ENCODE measurements at regions of chr1 and their contacts with region 1.

Region 1: GRCh38 chr1:76154206-76154956 is 79.8 kb downstream of the ST6GALNAC3 start:
- DNase-seq: peak; percentile 41 to 91
- H3K4me3 ChIP-seq: no peak overlapping the region
- H3K27ac ChIP-seq: no peak overlapping the region
- H3K4me1 ChIP-seq: peaks cover 3 to 4% (median 3%) of the 10 kb centered on the region in 4 experiments; a peak in 6 of 7 replicates
- H3K27me3 ChIP-seq: no peaks in the 10 kb centered on the region
- CTCF ChIP-seq: peak; percentile 90 to 98 (median 97)
- EP300 ChIP-seq: no peak
- POLR2A ChIP-seq: no peak
- RAD21 ChIP-seq: peak; percentile 96 to 98

Region 2: GRCh38 chr1:75908717-75909152 is 245.6 kb before region 1 on chr1:
- CTCF ChIA-PET with region 1: interaction called, 11 read pairs
- POLR2A ChIA-PET with region 1: no interaction called
- DNase-seq: peak; percentile 9 to 55
- H3K4me3 ChIP-seq: no peak overlapping the region
- H3K27ac ChIP-seq: no peak overlapping the region
- H3K4me1 ChIP-seq: peaks cover 0 to 3% (median 0%) of the 10 kb centered on the region in 4 experiments; a peak in 2 of 7 replicates
- H3K27me3 ChIP-seq: no peaks in the 10 kb centered on the region
- CTCF ChIP-seq: peak in 2 of 3 experiments; percentile 75 to 80; a peak in 3 of 4 replicates
- EP300 ChIP-seq: no peak
- POLR2A ChIP-seq: no peak
- RAD21 ChIP-seq: peak; percentile 92 to 96

Region 3: DNA sequence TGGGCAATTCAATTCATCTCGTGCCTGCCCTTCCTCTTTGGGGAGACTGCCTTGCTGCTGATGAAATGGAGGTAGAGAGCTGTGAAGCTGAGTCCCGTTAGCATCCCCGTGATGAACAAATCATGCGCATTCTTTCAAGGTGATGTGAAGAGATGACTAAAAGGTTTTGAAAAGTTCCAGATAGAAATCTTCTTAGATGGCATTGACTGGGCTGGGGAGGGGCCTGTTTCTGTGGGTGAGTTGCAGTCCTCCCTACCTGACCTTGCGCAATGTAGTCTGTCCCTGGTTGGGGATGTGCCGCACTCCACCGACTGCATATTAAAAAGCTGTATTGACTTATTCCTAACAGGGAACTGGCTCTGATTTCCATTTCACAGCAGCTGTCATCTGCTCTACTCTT is 30.2 kb before region 1 on chr1:
- CTCF ChIA-PET with region 1: no interaction called
- POLR2A ChIA-PET with region 1: no interaction called
- DNase-seq: no peak
- H3K4me3 ChIP-seq: no peak overlapping the region
- H3K27ac ChIP-seq: no peak overlapping the region
- H3K4me1 ChIP-seq: no peaks in the 10 kb centered on the region
- H3K27me3 ChIP-seq: no peaks in the 10 kb centered on the region; a peak in 1 of 7 replicates
- CTCF ChIP-seq: no peak
- EP300 ChIP-seq: no peak
- POLR2A ChIP-seq: no peak
- RAD21 ChIP-seq: no peak

Region 4: GRCh38 chr1:76136894-76137293 is 17.5 kb before region 1 on chr1:
- CTCF ChIA-PET with region 1: interaction called, 14 read pairs
- POLR2A ChIA-PET with region 1: no interaction called
- DNase-seq: no peak
- H3K4me3 ChIP-seq: no peak overlapping the region
- H3K27ac ChIP-seq: no peak overlapping the region
- H3K4me1 ChIP-seq: peaks cover 0 to 9% (median 5%) of the 10 kb centered on the region in 4 experiments; a peak in 5 of 7 replicates
- H3K27me3 ChIP-seq: no peaks in the 10 kb centered on the region
- CTCF ChIP-seq: no peak
- EP300 ChIP-seq: no peak
- POLR2A ChIP-seq: no peak
- RAD21 ChIP-seq: no peak

Region 5: GRCh38 chr1:76170513-76170912 is 16.1 kb after region 1 on chr1:
- CTCF ChIA-PET with region 1: interaction called, 22 read pairs
- POLR2A ChIA-PET with region 1: no interaction called
- DNase-seq: no peak
- H3K4me3 ChIP-seq: no peak overlapping the region
- H3K27ac ChIP-seq: no peak overlapping the region
- H3K4me1 ChIP-seq: peaks cover 0 to 2% (median 0%) of the 10 kb centered on the region in 4 experiments; a peak in 1 of 7 replicates
- H3K27me3 ChIP-seq: no peaks in the 10 kb centered on the region
- CTCF ChIP-seq: no peak
- EP300 ChIP-seq: no peak
- POLR2A ChIP-seq: no peak
- RAD21 ChIP-seq: no peak

Region 6: DNA sequence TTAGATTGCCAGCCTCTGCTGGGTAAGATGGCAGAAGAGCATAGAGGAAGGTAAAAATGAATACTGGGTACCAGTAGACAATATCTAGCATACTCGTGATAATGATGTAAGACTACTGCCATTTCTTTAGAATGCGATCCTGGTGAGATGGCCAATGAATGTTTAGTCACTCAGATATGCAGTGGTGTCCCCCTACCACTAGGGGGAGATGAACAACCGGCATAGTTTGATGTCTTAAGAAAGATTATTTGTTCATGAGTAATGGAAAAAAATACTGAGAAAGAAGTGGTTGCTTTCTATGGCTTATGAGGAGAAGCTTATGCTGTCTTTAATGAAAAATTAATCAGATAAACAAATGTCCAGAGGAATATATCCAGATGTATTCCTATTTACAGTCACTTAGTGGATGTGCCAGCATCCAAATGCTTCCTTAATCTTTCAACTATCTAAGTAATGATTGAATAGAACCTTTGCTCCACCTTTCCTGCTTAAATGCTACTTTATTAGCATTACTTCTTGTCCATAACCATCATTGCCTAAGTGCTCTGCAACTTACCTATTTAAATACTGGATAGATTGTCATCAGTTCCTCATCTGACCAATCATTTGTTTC is 176.7 kb after region 1 on chr1:
- CTCF ChIA-PET with region 1: interaction called, 31 read pairs
- POLR2A ChIA-PET with region 1: no interaction called
- DNase-seq: peak in 1 of 2 experiments; percentile 38
- H3K4me3 ChIP-seq: no peak overlapping the region
- H3K27ac ChIP-seq: no peak overlapping the region
- H3K4me1 ChIP-seq: peaks cover 0 to 4% (median 1%) of the 10 kb centered on the region in 4 experiments; a peak in 2 of 7 replicates
- H3K27me3 ChIP-seq: no peaks in the 10 kb centered on the region
- CTCF ChIP-seq: peak; percentile 8 to 84 (median 56)
- EP300 ChIP-seq: no peak
- POLR2A ChIP-seq: no peak
- RAD21 ChIP-seq: peak; percentile 88 to 93